Sciatic nerve (tissue), 2 donors: ENCODE measurements at regions of chr17 and their contacts with region 1.

Region 1: DNA sequence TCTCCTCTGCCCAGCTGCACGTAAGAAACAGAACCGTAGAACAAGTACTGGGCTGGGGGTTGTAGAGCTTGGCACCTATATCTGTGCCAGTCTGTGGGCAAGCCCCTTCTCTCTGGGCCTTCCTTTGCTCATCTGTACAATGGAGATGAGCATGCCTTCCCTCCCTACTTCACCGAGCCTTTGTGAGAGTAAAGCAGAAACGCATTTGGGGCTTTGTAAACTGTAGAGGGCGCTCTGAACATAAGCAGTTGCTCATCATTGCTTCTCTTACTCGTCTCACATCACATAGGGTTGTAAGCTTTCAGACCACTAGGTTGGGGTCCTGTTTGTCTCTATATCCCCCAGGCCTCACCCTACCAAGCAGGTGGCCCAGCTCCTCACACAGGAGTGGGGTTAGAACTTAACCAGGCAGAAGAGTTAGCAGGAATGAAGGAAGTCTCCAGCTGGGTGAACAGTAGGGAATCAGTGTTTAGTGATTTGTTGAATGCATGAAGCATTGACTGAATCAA is 15.1 kb downstream of the SAMD14 start:
- DNase-seq: no peak
- ATAC-seq: no peak

Region 2: GRCh38 chr17:49862781-49863331 is 252.0 kb before region 1 on chr17:
- intact Hi-C with region 1: no loop called
- DNase-seq: no peak
- ATAC-seq: no peak

Region 3: GRCh38 chr17:50297407-50297865 is 182.5 kb after region 1 on chr17:
- intact Hi-C with region 1: loop called (anchors 10 kb)
- DNase-seq: peak; percentile 87
- ATAC-seq: peak; percentile 92

Region 4: GRCh38 chr17:50397111-50397918 is 282.4 kb after region 1 on chr17 and contains the start of gene LRRC59:
- intact Hi-C with region 1: no loop called
- DNase-seq: peak; percentile 94
- ATAC-seq: peak; percentile 97
- total RNA-seq, gene LRRC59: 33.6 TPM